ENCODE measurements at regions of chr3 and their contacts with region 1.

Region 1: GRCh38 chr3:196073188-196073838 is 8.6 kb downstream of the TFRC start:
- DNase-seq: no peak
- H3K4me3 ChIP-seq: no peak overlapping the region
- H3K27ac ChIP-seq: no peak overlapping the region
- H3K4me1 ChIP-seq: no peaks in the 10 kb centered on the region
- H3K27me3 ChIP-seq: no peaks in the 10 kb centered on the region
- CTCF ChIP-seq: peak; percentile 41 to 62 (median 45)

Region 2: DNA sequence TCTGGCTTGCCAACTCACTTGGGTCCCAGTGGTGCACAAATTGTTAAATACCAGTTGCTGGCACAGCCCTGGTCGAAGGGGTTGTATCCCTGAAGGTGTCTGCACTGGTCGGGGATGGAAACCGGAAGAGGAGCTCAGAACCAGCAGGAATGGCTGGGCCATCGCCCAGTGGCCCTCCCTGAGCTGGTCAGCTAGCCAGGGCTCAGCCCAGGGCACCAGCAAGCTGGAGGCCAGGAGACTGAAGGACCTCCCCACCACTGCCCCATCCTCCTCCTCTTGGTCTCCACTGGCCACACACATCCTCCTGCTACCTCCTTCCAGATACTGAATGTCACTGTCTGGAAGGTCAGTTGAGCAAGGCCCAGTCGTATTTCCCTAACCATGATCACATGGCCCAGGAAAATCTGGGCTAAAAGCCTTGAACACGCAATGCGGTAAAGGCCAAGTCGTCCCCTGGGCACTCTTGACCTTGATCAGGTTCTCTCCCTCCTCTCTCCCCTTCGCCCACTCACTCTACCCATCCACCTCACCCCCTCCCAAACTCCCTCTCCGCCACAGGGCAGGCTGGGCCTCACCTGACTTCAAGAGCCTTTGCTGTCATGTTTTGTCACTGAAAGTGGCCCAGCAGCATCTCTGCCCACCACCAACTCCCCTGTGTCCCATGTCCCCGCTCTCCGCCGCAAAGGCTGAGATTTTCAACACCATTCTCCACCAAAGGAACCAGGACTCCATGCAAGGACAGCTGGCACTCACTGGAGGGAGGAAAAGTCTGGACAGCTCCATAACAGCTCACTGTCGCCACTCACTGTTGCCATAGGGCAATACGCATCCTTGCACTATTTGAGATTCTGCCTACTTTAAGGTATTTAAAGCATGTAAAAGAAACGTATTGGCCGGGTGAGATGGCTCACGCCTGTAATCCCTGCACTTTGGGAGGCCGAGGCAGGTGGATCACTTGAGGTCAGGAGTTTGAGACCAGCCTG is 125.7 kb after region 1 on chr3:
- intact Hi-C with region 1: loop called (anchors 5 kb)
- DNase-seq: no peak
- H3K4me3 ChIP-seq: no peak overlapping the region
- H3K27ac ChIP-seq: no peak overlapping the region
- H3K4me1 ChIP-seq: no peaks in the 10 kb centered on the region
- H3K27me3 ChIP-seq: no peaks in the 10 kb centered on the region
- CTCF ChIP-seq: no peak

Measured in ascending aorta (tissue), 2 donors.